Activated naive CD4-positive, alpha-beta T cell treated with anti-CD3 and anti-CD28 coated beads for 36 hours (primary cell): ENCODE measurements at regions of chr2 and their contacts with region 1.

Region 1: GRCh38 chr2:218671654-218672566 is at the starts of genes RNF25 and STK36:
- DNase-seq: peak; percentile 86
- H3K4me3 Mint-ChIP-seq: peak within 1 kb of the TSS; percentile 98
- H3K27ac Mint-ChIP-seq: peak within 1 kb of the TSS; percentile 90
- H3K4me1 Mint-ChIP-seq: peaks cover 22% of the 10 kb centered on the region
- H3K27me3 Mint-ChIP-seq: no peaks in the 10 kb centered on the region
- total RNA-seq, gene RNF25: 9.6 to 10.4 TPM
- total RNA-seq, gene STK36: 14.7 to 15.1 TPM

Region 2: DNA sequence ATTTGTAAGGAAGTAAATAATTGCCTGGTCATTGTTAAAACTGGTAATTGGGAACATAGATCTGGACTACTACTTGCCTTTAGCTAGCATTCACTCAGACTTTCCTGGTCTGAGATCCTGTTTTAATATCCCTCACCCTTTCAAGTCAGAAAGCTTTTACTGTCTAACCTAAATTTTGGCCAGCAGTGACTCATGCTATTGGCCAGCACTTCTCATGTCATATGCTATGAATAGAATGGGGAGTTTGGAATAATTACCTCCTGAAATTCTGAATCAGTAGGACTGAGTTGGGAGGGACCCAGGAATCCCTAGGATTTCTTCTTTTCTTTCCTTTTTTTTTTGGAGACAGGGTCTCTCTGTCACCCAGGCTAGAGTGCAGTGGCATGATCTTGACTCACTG is 19.3 kb after region 1 on chr2:
- CTCF ChIA-PET with region 1: interaction called, 14 read pairs
- intact Hi-C with region 1: no loop called
- DNase-seq: no peak
- H3K4me3 Mint-ChIP-seq: no peak overlapping the region
- H3K27ac Mint-ChIP-seq: no peak overlapping the region
- H3K4me1 Mint-ChIP-seq: peaks cover 2% of the 10 kb centered on the region
- H3K27me3 Mint-ChIP-seq: no peaks in the 10 kb centered on the region

Region 3: GRCh38 chr2:218710687-218711549 is 39.0 kb after region 1 on chr2 and contains the start of gene TTLL4:
- CTCF ChIA-PET with region 1: interaction called, 6 read pairs
- intact Hi-C with region 1: loop called (anchors 1 kb)
- DNase-seq: peak; percentile 99
- H3K4me3 Mint-ChIP-seq: peak within 1 kb of the TSS; percentile 98
- H3K27ac Mint-ChIP-seq: peak within 1 kb of the TSS; percentile 80
- H3K4me1 Mint-ChIP-seq: peaks cover 15% of the 10 kb centered on the region
- H3K27me3 Mint-ChIP-seq: peaks cover 3% of the 10 kb centered on the region
- total RNA-seq, gene TTLL4: 23.7 to 24.7 TPM

Region 4: DNA sequence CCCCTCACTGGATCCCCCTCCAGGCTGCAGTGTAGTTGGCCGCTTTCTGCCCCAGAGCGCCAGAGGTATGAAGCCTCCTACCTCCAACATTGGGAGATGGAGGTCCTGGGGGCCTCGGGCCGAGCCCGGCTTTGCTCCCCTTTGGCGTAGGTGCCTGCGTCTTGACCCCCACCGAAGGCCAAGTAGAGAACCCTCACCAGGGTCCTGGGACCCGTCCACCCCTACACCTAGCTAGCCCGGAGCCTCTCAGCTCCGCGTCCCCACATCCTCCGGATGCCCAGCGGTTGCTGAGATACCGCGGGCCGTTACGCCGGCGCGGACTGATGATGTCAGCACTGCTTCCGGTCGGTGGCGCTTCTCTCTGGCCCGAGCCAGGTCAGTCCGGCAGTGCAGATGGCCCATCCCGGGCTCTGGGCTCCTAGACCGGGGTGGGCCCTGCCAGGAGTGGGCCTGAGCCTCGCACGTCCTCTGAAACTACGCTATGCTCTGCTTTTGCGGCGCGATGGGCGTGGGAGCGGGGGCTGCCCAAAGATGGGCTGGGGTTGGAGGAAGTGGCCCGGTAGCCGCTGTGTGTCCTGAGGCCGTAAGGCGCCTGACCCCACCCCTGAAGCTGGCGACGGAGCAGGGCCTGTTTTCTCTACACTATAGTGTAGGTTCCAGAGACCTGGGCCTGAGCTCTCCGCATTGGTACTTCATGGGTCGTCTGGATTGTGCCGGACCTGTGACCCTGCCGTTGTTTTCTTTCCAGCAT is 573.4 kb after region 1 on chr2 and contains the starts of genes GLB1L and STK16:
- CTCF ChIA-PET with region 1: no interaction called
- intact Hi-C with region 1: loop called (anchors 5 kb)
- DNase-seq: peak; percentile 92
- H3K4me3 Mint-ChIP-seq: peak within 1 kb of the TSS; percentile 98
- H3K27ac Mint-ChIP-seq: peak within 1 kb of the TSS; percentile 99
- H3K4me1 Mint-ChIP-seq: peaks cover 57% of the 10 kb centered on the region
- H3K27me3 Mint-ChIP-seq: no peaks in the 10 kb centered on the region
- total RNA-seq, gene GLB1L: 2.1 TPM
- total RNA-seq, gene STK16: 33.7 to 35.5 TPM